ENCODE measurements at regions of chr7 and their contacts with region 1.

Region 1: DNA sequence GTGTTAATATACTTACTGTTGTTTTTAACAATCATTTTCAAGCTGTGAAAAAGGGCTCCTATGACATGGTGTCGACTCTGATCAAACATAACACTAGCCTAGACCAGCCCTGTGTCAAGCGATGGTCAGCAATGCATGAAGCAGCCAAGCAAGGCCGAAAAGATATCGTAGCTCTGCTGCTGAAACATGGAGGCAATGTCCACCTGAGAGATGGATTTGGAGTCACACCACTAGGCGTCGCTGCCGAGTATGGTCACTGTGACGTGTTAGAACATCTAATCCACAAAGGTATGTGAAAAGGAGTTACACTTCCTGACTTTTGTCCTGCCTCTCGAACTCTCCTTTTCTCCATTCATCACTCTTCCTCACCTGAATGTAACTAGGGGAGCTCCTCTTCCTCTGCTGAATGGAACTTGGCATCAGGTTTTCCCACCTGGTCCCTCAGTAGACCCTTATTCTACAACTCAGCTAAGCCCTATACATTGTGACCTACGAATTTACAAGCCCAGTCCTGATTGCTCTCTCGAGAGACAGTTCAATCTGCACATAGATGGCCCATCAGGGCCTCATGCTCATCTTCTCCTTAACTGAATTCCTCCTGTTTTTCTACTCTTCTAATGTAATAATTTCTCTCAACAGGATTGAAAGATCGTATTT is 23.0 kb downstream of the ASB15 start:
- DNase-seq: peak; percentile 36
- H3K4me3 Mint-ChIP-seq: no peak overlapping the region
- H3K27ac Mint-ChIP-seq: no peak overlapping the region
- H3K4me1 Mint-ChIP-seq: no peaks in the 10 kb centered on the region
- H3K27me3 Mint-ChIP-seq: peaks cover 4% of the 10 kb centered on the region

Region 2: GRCh38 chr7:123494193-123494796 is 130.4 kb before region 1 on chr7:
- intact Hi-C with region 1: loop called (anchors 5 kb)
- DNase-seq: no peak
- H3K4me3 Mint-ChIP-seq: no peak overlapping the region
- H3K27ac Mint-ChIP-seq: no peak overlapping the region
- H3K4me1 Mint-ChIP-seq: no peaks in the 10 kb centered on the region
- H3K27me3 Mint-ChIP-seq: peaks cover 6% of the 10 kb centered on the region

Region 3: DNA sequence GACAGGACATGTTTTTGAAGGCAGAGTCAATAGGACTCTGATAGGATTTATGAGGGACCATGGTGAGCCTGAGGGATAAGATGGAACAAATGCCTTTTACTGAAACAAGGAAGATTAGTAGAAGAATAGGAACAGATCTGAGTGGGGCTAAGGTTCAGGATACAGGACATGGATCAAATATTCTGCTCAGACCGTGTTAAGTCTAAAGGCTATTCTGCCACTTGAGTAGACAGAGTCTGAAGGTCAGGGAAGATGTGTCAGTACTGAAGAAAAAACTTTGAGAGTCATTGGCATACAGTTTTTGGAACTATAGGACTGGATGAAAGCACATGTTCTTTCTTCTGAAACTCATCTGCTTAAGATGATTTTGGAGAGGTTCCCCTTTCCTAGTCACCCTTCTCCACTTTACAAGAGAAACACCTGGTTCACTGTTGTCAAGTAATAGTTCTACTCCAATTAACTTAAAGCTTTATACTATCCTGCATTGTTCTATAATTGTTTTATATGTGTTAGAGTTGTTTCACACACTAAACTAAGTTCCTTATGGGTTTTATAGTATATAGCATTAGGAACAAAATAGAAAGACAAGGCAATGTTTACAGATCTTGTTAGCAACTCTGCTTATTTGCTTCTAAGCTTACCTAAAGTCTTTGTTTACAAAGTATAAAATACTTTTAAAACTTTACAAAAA is 80.7 kb after region 1 on chr7:
- intact Hi-C with region 1: loop called (anchors 2 kb)
- DNase-seq: no peak
- H3K4me3 Mint-ChIP-seq: no peak overlapping the region
- H3K27ac Mint-ChIP-seq: peak overlapping the region; percentile 27
- H3K4me1 Mint-ChIP-seq: peaks cover 10% of the 10 kb centered on the region
- H3K27me3 Mint-ChIP-seq: no peaks in the 10 kb centered on the region

Region 4: GRCh38 chr7:123871998-123872867 is 247.6 kb after region 1 on chr7:
- intact Hi-C with region 1: loop called (anchors 1 kb)
- DNase-seq: no peak
- H3K4me3 Mint-ChIP-seq: no peak overlapping the region
- H3K27ac Mint-ChIP-seq: no peak overlapping the region
- H3K4me1 Mint-ChIP-seq: no peaks in the 10 kb centered on the region
- H3K27me3 Mint-ChIP-seq: peaks cover 3% of the 10 kb centered on the region

Region 5: GRCh38 chr7:123916240-123916724 is 291.6 kb after region 1 on chr7:
- intact Hi-C with region 1: loop called (anchors 1 kb)
- DNase-seq: no peak
- H3K4me3 Mint-ChIP-seq: no peak overlapping the region
- H3K27ac Mint-ChIP-seq: no peak overlapping the region
- H3K4me1 Mint-ChIP-seq: no peaks in the 10 kb centered on the region
- H3K27me3 Mint-ChIP-seq: peaks cover 2% of the 10 kb centered on the region

Measured in activated T-helper 1 cell treated with anti-CD3 and anti-CD28 coated beads, Interleukin-12 subunit alpha, Interleukin-12 subunit beta, Interleukin-2, Interleukin-4 antibody, amounts not matched to agents 30 ng/mL and 10 ng/mL and 1 ng/mL, durations not matched to agents 14 hours and 24 hours and 36 hours (primary cell).